Activated CD4-positive, alpha-beta T cell treated with anti-CD3 and anti-CD28 coated beads for 36 hours (primary cell): ENCODE measurements at regions of chr12 and their contacts with region 1.

Region 1: DNA sequence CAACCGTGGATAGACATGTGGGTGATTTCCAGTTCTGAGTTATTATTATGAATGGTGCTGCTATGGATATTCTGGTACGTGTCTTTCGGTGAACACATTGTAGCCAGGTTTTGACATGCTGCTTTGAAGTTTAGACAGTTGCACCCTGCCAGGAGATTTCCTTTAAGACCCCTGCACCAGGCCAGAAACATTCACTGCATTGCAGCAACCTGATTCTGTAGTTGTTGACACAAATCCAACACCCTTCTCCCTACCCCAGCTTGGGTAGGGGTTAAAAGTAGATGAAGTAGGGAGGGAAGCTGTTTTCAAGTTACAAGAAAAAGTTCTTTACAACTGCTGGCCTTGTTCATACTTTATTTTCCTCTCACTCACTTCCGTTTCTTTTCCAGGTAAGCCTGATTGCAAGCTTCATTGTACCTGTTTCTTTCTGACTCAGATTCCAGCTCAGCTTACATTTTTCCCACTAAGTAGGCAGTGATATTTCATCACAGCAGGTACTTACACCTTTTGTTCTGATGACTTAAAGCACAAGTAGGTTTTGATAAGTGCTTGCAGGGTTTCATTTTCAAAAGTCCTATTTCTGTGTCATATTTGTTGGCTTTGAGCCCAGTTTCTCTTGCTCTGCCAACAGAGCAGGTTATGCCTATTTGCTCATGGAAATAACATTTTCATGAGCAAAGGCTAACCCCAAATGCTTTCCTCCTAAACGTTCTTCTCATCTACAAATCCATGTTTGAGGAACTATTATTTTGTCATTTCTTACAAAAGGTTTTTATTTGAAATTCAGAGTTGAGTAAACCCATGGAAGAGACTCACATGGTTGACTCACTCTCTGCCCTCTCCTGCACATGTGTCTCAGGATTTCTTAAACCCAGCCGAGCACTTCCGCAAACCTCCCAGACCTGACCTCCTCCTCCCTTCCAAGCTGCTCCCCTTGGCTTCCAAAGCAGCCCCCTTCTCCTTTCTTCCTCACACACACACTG is 12.1 kb upstream of the LTA4H start:
- DNase-seq: peak; percentile 30
- ATAC-seq: peak; percentile 83
- H3K4me3 Mint-ChIP-seq: peak overlapping the region; percentile 20
- H3K27ac Mint-ChIP-seq: peak overlapping the region; percentile 92
- H3K4me1 Mint-ChIP-seq: peaks cover 58% of the 10 kb centered on the region
- H3K27me3 Mint-ChIP-seq: no peaks in the 10 kb centered on the region

Region 2: GRCh38 chr12:95805864-95806671 is 241.5 kb before region 1 on chr12:
- CTCF ChIA-PET with region 1: no interaction called
- POLR2A ChIA-PET with region 1: no interaction called
- intact Hi-C with region 1: no loop called
- DNase-seq: no peak
- ATAC-seq: peak; percentile 72
- H3K4me3 Mint-ChIP-seq: no peak overlapping the region
- H3K27ac Mint-ChIP-seq: no peak overlapping the region
- H3K4me1 Mint-ChIP-seq: peaks cover 4% of the 10 kb centered on the region
- H3K27me3 Mint-ChIP-seq: peaks cover 15% of the 10 kb centered on the region

Region 3: DNA sequence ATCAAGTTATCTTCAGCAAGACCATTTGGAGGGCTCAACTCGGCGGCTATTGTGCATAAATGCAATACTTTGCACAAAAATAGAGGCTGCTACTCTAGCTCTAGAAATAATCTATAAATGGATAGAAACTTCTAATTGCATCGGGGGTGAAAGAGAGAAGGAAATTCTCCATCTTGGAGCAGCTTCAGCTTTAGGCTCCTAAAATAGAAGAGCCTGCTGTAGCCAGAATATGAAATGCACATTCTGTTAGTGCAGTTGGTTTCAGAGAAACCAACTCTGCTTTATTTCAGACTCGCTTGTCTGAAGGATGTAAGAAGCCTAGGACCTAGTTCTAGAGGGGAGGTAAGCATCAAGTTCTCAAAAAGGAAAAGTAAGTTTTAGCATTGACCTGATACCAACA is 150.7 kb before region 1 on chr12:
- CTCF ChIA-PET with region 1: no interaction called
- POLR2A ChIA-PET with region 1: no interaction called
- intact Hi-C with region 1: no loop called
- DNase-seq: no peak
- ATAC-seq: no peak
- H3K4me3 Mint-ChIP-seq: no peak overlapping the region
- H3K27ac Mint-ChIP-seq: no peak overlapping the region
- H3K4me1 Mint-ChIP-seq: no peaks in the 10 kb centered on the region
- H3K27me3 Mint-ChIP-seq: peaks cover 11% of the 10 kb centered on the region

Region 4: GRCh38 chr12:95986635-95987570 is 60.6 kb before region 1 on chr12:
- CTCF ChIA-PET with region 1: no interaction called
- POLR2A ChIA-PET with region 1: no interaction called
- intact Hi-C with region 1: no loop called
- DNase-seq: no peak
- ATAC-seq: no peak
- H3K4me3 Mint-ChIP-seq: no peak overlapping the region
- H3K27ac Mint-ChIP-seq: no peak overlapping the region
- H3K4me1 Mint-ChIP-seq: no peaks in the 10 kb centered on the region
- H3K27me3 Mint-ChIP-seq: no peaks in the 10 kb centered on the region

Region 5: DNA sequence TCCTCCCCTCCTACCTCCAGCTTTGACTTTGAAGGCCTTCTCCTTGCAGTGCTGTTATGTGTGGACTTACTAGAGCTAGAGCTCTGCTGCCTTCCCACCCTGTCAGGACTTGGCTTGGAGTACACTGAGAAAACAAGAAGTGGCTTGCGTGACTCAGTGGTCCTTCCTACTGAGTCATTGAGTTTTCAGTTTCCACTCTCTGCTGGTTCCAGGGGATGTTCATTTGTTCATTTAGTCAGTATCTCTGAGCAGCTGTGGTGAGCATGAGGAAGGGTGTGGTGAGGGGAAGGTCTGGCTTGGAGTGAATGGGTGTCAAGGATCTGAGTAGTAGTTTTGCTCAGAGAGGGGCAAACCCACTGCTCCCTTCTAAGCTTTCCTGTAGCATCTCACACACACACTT is 129.5 kb after region 1 on chr12:
- CTCF ChIA-PET with region 1: interaction called, 3 read pairs
- POLR2A ChIA-PET with region 1: no interaction called
- intact Hi-C with region 1: loop called (anchors 1 kb)
- DNase-seq: peak; percentile 88
- ATAC-seq: peak; percentile 98
- H3K4me3 Mint-ChIP-seq: peak overlapping the region; percentile 18
- H3K27ac Mint-ChIP-seq: peak overlapping the region; percentile 83
- H3K4me1 Mint-ChIP-seq: peaks cover 25% of the 10 kb centered on the region
- H3K27me3 Mint-ChIP-seq: no peaks in the 10 kb centered on the region

Region 6: DNA sequence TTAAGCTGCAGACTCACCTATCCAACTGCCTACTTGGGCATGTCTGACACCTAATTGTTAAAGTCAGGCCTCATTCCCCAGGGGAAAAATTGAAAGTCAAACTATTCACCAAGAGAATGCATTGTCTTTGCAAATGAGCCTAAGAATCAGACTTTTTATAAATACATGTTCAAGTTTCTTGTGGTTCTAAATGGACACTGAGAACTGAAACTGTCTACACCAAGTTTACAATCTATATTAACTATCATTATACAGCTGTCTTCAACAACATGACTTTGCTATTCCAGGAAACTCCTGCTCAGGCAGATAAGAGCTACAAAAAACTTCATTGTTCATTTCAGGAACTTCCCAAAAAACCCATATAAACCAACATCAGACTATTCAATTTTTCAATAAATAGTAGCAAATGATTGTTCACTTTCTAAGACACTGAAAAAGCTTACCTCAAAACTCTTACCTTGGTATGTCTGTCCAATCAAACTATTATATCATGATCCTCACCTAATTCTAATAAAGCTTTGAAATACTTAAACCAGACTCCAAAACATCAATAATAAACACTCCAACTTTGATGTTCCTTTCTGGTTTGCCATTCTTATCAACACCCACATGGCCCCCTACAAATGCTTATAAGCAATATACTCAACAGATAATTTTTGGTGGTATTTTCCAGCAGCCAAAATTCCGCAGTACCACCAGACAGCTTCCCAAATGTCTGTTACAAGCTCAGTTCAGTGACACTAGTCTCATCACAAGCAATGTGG is 328.5 kb after region 1 on chr12:
- CTCF ChIA-PET with region 1: no interaction called
- POLR2A ChIA-PET with region 1: no interaction called
- intact Hi-C with region 1: loop called in 1 of 2 experiments (anchors 5 kb)
- DNase-seq: no peak
- ATAC-seq: no peak
- H3K4me3 Mint-ChIP-seq: no peak overlapping the region
- H3K27ac Mint-ChIP-seq: peak overlapping the region; percentile 79
- H3K4me1 Mint-ChIP-seq: peaks cover 82% of the 10 kb centered on the region
- H3K27me3 Mint-ChIP-seq: no peaks in the 10 kb centered on the region

Region 7: GRCh38 chr12:96425321-96425720 is 377.8 kb after region 1 on chr12:
- CTCF ChIA-PET with region 1: no interaction called
- POLR2A ChIA-PET with region 1: no interaction called
- intact Hi-C with region 1: loop called in 1 of 2 experiments (anchors 1 kb)
- DNase-seq: peak; percentile 65
- ATAC-seq: peak; percentile 80
- H3K4me3 Mint-ChIP-seq: no peak overlapping the region
- H3K27ac Mint-ChIP-seq: peak overlapping the region; percentile 63
- H3K4me1 Mint-ChIP-seq: peaks cover 47% of the 10 kb centered on the region
- H3K27me3 Mint-ChIP-seq: peaks cover 2% of the 10 kb centered on the region